ENCODE measurements at regions of chr1 and their contacts with region 1.

Region 1: DNA sequence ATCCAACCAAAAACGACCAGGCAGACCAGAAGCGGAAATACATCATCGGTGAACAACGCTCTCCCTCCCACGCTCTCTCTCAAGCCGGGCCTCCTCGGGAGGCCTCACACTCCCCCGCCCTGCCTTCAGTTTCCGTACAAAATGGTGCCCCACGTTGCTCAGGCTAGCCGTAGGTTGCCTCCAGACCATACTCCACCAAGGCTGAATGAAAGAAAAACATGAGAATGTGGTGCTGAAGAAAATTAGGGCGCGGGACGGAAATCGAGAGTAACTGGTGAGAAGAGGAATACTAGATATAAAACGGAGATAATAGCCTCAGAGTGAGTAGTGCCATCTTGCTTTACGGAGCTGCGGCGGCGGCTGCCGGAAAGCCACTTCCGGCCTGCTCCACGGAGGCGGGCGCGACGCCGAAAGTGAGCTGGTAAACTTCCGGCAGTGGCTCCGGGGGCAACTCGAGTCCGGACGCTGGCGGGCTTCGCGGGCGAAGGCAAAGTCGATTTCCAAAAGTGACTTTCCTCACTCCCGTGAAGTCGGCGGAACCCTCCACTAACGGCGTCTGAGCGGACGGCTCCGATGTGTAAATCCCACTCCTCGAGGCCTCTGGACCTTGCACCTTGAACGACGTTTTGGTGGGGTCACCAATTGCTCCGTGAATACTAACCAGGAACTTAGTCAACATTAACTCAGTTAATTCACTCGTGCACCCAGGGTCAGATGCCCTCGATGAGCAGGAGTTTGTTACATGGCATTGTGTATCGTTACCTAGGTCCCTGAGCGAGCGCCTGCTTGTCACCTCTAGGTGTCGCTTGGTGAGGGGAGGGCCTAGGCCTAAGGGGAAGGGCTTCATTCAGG is at the start of gene SH3BP5L:
- DNase-seq: peak; percentile 95
- ATAC-seq: peak; percentile 90
- H3K4me3 Mint-ChIP-seq: peak within 1 kb of the TSS; percentile 83
- H3K27ac Mint-ChIP-seq: peak within 1 kb of the TSS; percentile 100
- H3K4me1 Mint-ChIP-seq: peaks cover 46% of the 10 kb centered on the region
- H3K27me3 Mint-ChIP-seq: no peaks in the 10 kb centered on the region
- CTCF ChIP-seq: peak; percentile 46
- total RNA-seq, gene SH3BP5L: 16.2 to 18.3 TPM

Region 2: GRCh38 chr1:248739572-248740205 is 86.4 kb before region 1 on chr1:
- CTCF ChIA-PET with region 1: no interaction called
- POLR2A ChIA-PET with region 1: no interaction called
- intact Hi-C with region 1: no loop called
- DNase-seq: no peak
- ATAC-seq: no peak
- H3K4me3 Mint-ChIP-seq: no peak overlapping the region
- H3K27ac Mint-ChIP-seq: no peak overlapping the region
- H3K4me1 Mint-ChIP-seq: no peaks in the 10 kb centered on the region
- H3K27me3 Mint-ChIP-seq: peaks cover 12% of the 10 kb centered on the region
- CTCF ChIP-seq: no peak

Region 3: DNA sequence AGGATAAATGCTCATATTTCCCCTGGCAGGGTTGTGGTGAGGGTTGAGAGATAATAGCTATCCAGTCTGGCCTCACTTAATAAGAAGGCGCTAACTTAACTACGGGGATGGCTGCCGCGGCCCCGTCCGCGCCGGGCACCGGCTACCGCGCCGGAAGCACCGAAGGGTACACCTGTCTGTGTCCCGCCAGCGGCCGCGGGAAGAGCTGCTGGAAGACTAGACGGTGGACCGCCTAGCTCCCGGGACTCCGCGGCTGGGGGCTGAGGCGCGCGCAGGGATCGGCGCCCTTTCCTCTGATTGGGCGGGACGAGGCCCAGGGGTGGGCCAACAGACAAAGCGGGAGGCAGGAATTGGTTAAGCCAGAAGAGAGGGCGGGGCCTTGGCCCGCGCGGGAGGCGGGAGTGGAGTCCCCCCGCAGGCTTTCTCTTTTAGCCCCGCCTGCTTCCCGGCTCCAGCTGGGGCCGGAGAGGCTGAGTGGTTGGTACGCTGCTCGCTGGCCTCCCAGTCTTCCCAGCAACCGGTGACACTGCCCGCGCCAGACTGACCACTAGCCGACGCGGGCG is 11.7 kb after region 1 on chr1 and contains the start of gene ZNF672:
- CTCF ChIA-PET with region 1: interaction called, 56 read pairs
- POLR2A ChIA-PET with region 1: interaction called, 45 read pairs
- intact Hi-C with region 1: no loop called
- DNase-seq: peak; percentile 96
- ATAC-seq: peak; percentile 88
- H3K4me3 Mint-ChIP-seq: no peak within 1 kb of the TSS
- H3K27ac Mint-ChIP-seq: no peak within 1 kb of the TSS
- H3K4me1 Mint-ChIP-seq: peaks cover 20% of the 10 kb centered on the region
- H3K27me3 Mint-ChIP-seq: peaks cover 2% of the 10 kb centered on the region
- CTCF ChIP-seq: no peak
- total RNA-seq, gene ZNF672: 43.8 to 45.1 TPM

Region 4: DNA sequence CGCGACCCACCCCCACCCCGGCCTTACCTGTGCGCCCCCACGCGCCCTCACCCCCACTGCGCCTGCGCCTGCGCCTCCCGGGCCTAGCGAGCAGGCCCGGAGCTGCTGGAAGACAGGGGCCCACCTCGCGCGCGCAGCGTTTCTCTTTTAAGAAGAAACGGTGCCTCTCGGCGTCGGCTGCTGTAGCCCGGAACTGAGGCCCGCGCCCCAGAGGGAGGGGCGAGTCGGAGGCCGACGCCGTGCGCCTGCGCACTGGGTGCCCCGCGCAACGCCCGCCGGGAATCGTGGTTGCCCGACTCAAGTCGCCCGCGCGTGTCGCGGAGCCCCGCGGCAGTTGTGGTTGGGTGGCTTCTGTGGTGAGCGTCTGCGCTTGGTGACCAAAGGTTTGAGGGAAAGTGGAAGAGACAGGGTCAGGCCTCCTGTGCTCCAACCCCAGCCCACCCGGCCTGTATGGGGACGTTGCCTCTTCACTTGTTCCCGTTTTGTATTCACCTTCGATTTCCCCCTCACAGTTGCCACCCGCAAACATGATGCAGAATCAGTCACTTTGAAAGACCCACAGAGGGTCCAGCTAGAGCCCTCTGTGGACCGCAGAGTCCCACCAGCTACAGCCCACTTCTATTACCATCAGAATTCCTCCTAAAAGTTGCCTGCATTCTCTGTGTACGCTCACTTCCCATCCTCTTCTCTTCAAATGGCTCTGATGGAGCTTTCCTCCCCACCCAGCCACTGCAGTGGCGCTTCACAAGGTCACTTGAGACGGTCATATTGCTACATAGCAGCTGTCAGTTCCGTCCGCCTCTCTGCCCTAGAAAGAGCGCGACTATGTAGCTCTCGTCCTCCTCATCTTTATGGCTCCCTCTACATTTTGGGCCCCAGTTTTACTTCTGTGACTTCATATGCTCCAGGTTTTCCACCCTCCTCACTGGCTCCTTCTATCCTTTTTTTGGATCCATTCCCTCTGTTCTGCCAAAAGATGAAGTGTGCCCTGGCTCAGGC is 33.1 kb after region 1 on chr1 and contains the start of gene ZNF692:
- CTCF ChIA-PET with region 1: interaction called, 18 read pairs
- POLR2A ChIA-PET with region 1: interaction called, 6 read pairs
- intact Hi-C with region 1: no loop called
- DNase-seq: peak; percentile 99
- ATAC-seq: peak; percentile 86
- H3K4me3 Mint-ChIP-seq: peak within 1 kb of the TSS; percentile 88
- H3K27ac Mint-ChIP-seq: peak within 1 kb of the TSS; percentile 95
- H3K4me1 Mint-ChIP-seq: peaks cover 37% of the 10 kb centered on the region
- H3K27me3 Mint-ChIP-seq: no peaks in the 10 kb centered on the region
- CTCF ChIP-seq: no peak
- total RNA-seq, gene ZNF692: 80.8 to 85.6 TPM

Region 5: DNA sequence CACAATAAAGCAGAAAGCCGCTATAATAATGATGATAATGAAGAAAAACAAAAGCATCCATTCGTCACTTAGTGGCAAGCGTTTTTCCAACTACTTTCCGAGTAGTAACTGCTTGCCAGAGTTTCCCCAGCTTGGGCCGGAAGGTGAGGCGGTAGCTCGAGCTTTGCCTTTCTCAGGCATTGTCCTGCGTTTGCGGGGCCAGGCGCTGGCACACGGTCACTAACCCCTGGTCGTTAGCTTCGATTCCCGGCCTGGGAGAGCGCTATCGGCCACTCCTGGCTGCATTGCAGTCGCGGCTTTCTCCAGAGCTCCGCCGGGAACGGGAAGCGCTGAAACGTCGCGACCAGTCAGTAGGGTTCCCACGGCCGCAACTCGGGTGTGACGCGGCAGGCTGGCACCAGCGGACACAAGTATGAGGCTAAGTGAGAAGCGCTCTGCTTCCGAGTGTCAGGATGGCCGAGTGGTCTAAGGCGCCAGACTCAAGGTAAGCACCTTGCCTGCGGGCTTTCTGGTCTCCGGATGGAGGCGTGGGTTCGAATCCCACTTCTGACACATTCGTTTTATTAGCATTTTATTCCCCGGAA is 47.4 kb after region 1 on chr1:
- CTCF ChIA-PET with region 1: interaction called, 10 read pairs
- POLR2A ChIA-PET with region 1: no interaction called
- intact Hi-C with region 1: no loop called
- DNase-seq: peak; percentile 95
- ATAC-seq: peak; percentile 83
- H3K4me3 Mint-ChIP-seq: peak overlapping the region; percentile 90
- H3K27ac Mint-ChIP-seq: peak overlapping the region; percentile 95
- H3K4me1 Mint-ChIP-seq: peaks cover 19% of the 10 kb centered on the region
- H3K27me3 Mint-ChIP-seq: peaks cover 4% of the 10 kb centered on the region
- CTCF ChIP-seq: no peak